ENCODE measurements at regions of chr12 and their contacts with region 1.

Region 1: GRCh38 chr12:67305544-67305943 is 36.4 kb downstream of the CAND1 start:
- DNase-seq: no peak
- CTCF ChIP-seq: no peak

Region 2: GRCh38 chr12:67290378-67290777 is 15.2 kb before region 1 on chr12:
- CTCF ChIA-PET with region 1: interaction called, 21 read pairs
- POLR2A ChIA-PET with region 1: no interaction called
- DNase-seq: no peak
- CTCF ChIP-seq: no peak

Region 3: GRCh38 chr12:67315661-67316060 is 10.1 kb after region 1 on chr12:
- CTCF ChIA-PET with region 1: interaction called, 19 read pairs
- POLR2A ChIA-PET with region 1: no interaction called
- DNase-seq: no peak
- CTCF ChIP-seq: no peak